ENCODE measurements at regions of chr11 and their contacts with region 1.

Region 1: DNA sequence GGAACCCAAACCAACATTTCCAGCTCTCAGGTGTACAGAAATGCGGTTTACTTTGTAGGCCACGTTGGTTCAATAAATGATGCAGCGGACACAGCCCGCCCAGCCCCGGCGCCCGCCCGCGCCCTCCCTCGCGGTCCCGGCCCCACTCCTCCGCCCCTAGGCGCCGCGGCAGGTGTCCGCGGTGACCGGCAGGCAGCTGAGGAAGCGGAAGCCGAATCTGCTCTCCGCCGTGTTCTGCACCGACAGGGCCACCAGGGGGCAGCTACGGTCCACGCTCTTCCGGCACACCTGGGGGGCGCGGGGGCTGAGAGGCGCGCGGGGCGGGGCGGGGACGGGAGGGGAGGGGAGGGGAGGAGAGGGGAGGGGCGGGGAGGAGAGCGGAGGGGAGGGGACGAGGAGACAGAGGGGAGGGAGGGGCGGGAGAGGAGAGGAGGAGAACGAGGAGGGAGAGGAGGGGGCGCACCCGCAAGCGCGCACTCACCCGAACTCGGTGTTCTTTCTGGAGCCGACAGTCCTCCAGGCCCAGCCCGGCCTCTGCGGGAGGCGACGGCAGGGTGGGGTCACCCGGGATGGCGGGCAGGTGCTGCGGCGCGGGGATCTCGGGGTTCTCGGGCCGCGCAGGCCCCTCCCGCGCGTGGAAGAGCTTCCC is 5.6 kb downstream of the LMNTD2 start:
- DNase-seq: peak; percentile 77
- H3K4me3 Mint-ChIP-seq: peak overlapping the region; percentile 39
- H3K27ac Mint-ChIP-seq: no peak overlapping the region
- H3K4me1 Mint-ChIP-seq: peaks cover 7% of the 10 kb centered on the region
- H3K27me3 Mint-ChIP-seq: peaks cover 15% of the 10 kb centered on the region

Region 2: GRCh38 chr11:568306-569157 is 13.6 kb after region 1 on chr11:
- CTCF ChIA-PET with region 1: interaction called, 17 read pairs
- POLR2A ChIA-PET with region 1: interaction called, 25 read pairs
- DNase-seq: peak; percentile 96
- H3K4me3 Mint-ChIP-seq: peak overlapping the region; percentile 77
- H3K27ac Mint-ChIP-seq: peak overlapping the region; percentile 62
- H3K4me1 Mint-ChIP-seq: peaks cover 15% of the 10 kb centered on the region
- H3K27me3 Mint-ChIP-seq: no peaks in the 10 kb centered on the region

Region 3: GRCh38 chr11:575996-576768 is 21.2 kb after region 1 on chr11 and contains the start of gene PHRF1:
- CTCF ChIA-PET with region 1: interaction called, 7 read pairs
- POLR2A ChIA-PET with region 1: interaction called, 20 read pairs
- DNase-seq: peak; percentile 95
- H3K4me3 Mint-ChIP-seq: peak within 1 kb of the TSS; percentile 91
- H3K27ac Mint-ChIP-seq: peak within 1 kb of the TSS; percentile 95
- H3K4me1 Mint-ChIP-seq: peaks cover 44% of the 10 kb centered on the region
- H3K27me3 Mint-ChIP-seq: peaks cover 13% of the 10 kb centered on the region
- total RNA-seq, gene PHRF1: 38.7 to 39.1 TPM

Region 4: DNA sequence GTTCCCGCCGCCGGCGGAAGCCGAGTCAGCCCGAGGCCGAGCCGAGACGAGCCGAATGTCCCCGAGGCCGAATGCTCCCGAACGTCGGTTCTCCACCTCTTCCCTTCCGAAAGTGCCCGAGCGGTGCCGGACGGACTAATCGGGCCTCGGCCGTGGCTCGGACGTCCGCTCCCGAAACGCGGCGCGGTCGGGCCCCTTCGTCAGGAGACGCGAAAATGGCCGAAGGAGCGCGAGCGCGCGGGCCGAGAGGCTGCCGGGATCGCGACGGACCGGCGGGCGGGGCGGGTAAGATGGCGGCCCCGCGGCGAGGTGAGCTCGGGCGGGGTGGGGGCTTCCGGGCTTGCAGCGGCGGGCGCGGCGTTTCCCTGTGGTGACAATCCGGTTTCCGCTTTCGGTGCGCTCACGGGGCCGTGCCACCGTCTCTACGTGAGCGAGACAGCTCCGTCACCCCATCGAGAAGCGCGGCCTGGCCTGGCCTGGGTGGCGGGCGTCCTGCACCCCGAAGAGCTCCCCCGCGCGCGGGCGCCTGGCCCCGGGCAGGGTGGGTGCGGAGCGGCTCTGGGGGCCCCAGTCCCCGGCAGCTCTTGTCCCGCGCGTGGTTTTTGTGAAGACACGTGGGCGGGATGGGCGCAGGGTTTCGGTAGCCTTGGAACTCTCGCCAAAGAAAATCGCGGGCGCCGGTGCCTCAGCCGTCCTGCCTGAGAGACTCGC is 140.7 kb after region 1 on chr11 and contains the start of gene TMEM80:
- CTCF ChIA-PET with region 1: interaction called, 3 read pairs
- POLR2A ChIA-PET with region 1: interaction called, 11 read pairs
- DNase-seq: peak; percentile 99
- H3K4me3 Mint-ChIP-seq: peak within 1 kb of the TSS; percentile 89
- H3K27ac Mint-ChIP-seq: peak within 1 kb of the TSS; percentile 91
- H3K4me1 Mint-ChIP-seq: peaks cover 52% of the 10 kb centered on the region
- H3K27me3 Mint-ChIP-seq: no peaks in the 10 kb centered on the region
- total RNA-seq, gene TMEM80: 22.6 to 25.3 TPM

Region 5: GRCh38 chr11:720642-721246 is 165.8 kb after region 1 on chr11:
- CTCF ChIA-PET with region 1: interaction called, 17 read pairs
- POLR2A ChIA-PET with region 1: interaction called, 10 read pairs
- DNase-seq: peak; percentile 74
- H3K4me3 Mint-ChIP-seq: no peak overlapping the region
- H3K27ac Mint-ChIP-seq: no peak overlapping the region
- H3K4me1 Mint-ChIP-seq: peaks cover 22% of the 10 kb centered on the region
- H3K27me3 Mint-ChIP-seq: peaks cover 32% of the 10 kb centered on the region

Measured in activated CD4-positive, alpha-beta memory T cell treated with anti-CD3 and anti-CD28 coated beads, Interleukin-2, amount 10 ng/mL, durations not matched to agents 7 days and 5 days (primary cell).